ENCODE measurements at regions of chr22 and their contacts with region 1.

Region 1: GRCh38 chr22:25081409-25081824 is 118.2 kb upstream of the CRYBB3 start:
- DNase-seq: peak; percentile 76
- ATAC-seq: no peak
- H3K4me3 Mint-ChIP-seq: no peak overlapping the region
- H3K27ac Mint-ChIP-seq: peak overlapping the region; percentile 70
- H3K4me1 Mint-ChIP-seq: peaks cover 76% of the 10 kb centered on the region
- H3K27me3 Mint-ChIP-seq: no peaks in the 10 kb centered on the region

Region 2: GRCh38 chr22:25039754-25040153 is 41.7 kb before region 1 on chr22:
- CTCF ChIA-PET with region 1: no interaction called
- POLR2A ChIA-PET with region 1: no interaction called
- intact Hi-C with region 1: no loop called
- DNase-seq: no peak
- ATAC-seq: no peak
- H3K4me3 Mint-ChIP-seq: no peak overlapping the region
- H3K27ac Mint-ChIP-seq: no peak overlapping the region
- H3K4me1 Mint-ChIP-seq: no peaks in the 10 kb centered on the region
- H3K27me3 Mint-ChIP-seq: peaks cover 3% of the 10 kb centered on the region

Region 3: GRCh38 chr22:25057013-25057881 is 24.2 kb before region 1 on chr22:
- CTCF ChIA-PET with region 1: interaction called, 14 read pairs
- POLR2A ChIA-PET with region 1: interaction called, 6 read pairs
- intact Hi-C with region 1: loop called (anchors 1 kb)
- DNase-seq: peak; percentile 90
- ATAC-seq: peak; percentile 49
- H3K4me3 Mint-ChIP-seq: no peak overlapping the region
- H3K27ac Mint-ChIP-seq: no peak overlapping the region
- H3K4me1 Mint-ChIP-seq: peaks cover 59% of the 10 kb centered on the region
- H3K27me3 Mint-ChIP-seq: peaks cover 2% of the 10 kb centered on the region

Region 4: DNA sequence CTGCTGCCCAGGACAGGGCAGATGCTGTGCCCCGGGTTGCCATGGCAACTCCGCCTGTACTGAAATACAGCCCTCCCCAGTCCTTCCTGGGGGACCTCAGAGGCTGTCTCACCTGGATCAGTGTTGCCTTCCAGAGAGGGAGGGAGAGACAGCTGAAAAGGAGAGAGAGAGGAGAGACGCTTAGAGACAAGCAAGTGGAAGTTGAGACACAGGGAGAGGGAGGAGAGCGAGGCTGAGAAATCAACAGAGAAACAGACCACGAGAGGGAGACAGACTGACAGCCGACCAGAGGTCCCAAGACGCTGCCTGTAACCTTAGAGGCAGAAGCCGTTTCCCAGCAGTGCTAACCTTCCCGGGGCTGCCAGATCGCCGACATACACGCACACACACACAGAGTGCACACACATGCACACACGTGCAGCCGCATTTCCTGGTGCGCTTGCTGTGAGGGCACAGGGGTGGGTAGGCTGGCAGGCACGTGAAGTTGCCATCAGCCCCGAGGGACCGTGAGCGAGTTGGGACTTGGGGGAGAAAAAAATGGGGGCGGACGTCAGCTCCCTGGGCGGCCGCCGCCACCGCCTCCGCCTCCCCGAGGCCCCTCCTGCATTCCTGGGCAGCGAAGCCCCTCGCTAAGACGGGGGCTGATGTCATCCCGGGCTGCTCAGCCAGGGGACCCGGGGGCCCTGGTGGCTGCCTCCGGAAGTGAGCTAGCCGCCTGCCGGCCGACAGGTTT is 29.6 kb after region 1 on chr22:
- CTCF ChIA-PET with region 1: interaction called, 7 read pairs
- POLR2A ChIA-PET with region 1: no interaction called
- intact Hi-C with region 1: loop called in 1 of 2 experiments (anchors 2 kb)
- DNase-seq: peak; percentile 69
- ATAC-seq: peak; percentile 82
- H3K4me3 Mint-ChIP-seq: peak overlapping the region; percentile 64
- H3K27ac Mint-ChIP-seq: peak overlapping the region; percentile 30
- H3K4me1 Mint-ChIP-seq: peaks cover 21% of the 10 kb centered on the region
- H3K27me3 Mint-ChIP-seq: no peaks in the 10 kb centered on the region

Region 5: GRCh38 chr22:25134028-25134427 is 52.6 kb after region 1 on chr22:
- CTCF ChIA-PET with region 1: no interaction called
- POLR2A ChIA-PET with region 1: no interaction called
- intact Hi-C with region 1: no loop called
- DNase-seq: no peak
- ATAC-seq: no peak
- H3K4me3 Mint-ChIP-seq: no peak overlapping the region
- H3K27ac Mint-ChIP-seq: no peak overlapping the region
- H3K4me1 Mint-ChIP-seq: peaks cover 4% of the 10 kb centered on the region
- H3K27me3 Mint-ChIP-seq: no peaks in the 10 kb centered on the region

Region 6: DNA sequence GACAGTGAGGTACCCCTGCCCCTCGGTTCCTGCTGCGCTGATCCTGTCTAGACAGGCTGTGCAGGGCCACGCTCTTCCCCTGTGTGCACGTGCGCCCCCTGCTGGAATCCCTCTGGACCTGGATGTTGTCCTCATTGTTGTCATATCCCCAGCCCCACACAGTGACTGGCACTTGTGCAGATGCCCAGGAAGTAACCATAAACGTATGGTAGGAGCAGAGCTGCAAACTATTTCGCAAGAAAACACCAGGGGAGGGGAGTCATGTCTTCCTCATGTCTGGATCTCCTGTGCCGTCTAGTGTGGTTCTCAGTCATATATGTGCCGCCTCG is 252.7 kb after region 1 on chr22:
- CTCF ChIA-PET with region 1: interaction called, 9 read pairs
- POLR2A ChIA-PET with region 1: no interaction called
- intact Hi-C with region 1: loop called (anchors 2 to 10 kb)
- DNase-seq: peak; percentile 85
- ATAC-seq: peak; percentile 90
- H3K4me3 Mint-ChIP-seq: no peak overlapping the region
- H3K27ac Mint-ChIP-seq: no peak overlapping the region
- H3K4me1 Mint-ChIP-seq: no peaks in the 10 kb centered on the region
- H3K27me3 Mint-ChIP-seq: no peaks in the 10 kb centered on the region

Region 7: GRCh38 chr22:26295563-26296126 is 1214.2 kb after region 1 on chr22:
- CTCF ChIA-PET with region 1: no interaction called
- POLR2A ChIA-PET with region 1: no interaction called
- intact Hi-C with region 1: loop called in 1 of 2 experiments (anchors 5 kb)
- DNase-seq: no peak
- ATAC-seq: no peak
- H3K4me3 Mint-ChIP-seq: no peak overlapping the region
- H3K27ac Mint-ChIP-seq: peak overlapping the region; percentile 82
- H3K4me1 Mint-ChIP-seq: peaks cover 15% of the 10 kb centered on the region
- H3K27me3 Mint-ChIP-seq: no peaks in the 10 kb centered on the region